ENCODE measurements at regions of chr22 and their contacts with region 1.

Region 1: DNA sequence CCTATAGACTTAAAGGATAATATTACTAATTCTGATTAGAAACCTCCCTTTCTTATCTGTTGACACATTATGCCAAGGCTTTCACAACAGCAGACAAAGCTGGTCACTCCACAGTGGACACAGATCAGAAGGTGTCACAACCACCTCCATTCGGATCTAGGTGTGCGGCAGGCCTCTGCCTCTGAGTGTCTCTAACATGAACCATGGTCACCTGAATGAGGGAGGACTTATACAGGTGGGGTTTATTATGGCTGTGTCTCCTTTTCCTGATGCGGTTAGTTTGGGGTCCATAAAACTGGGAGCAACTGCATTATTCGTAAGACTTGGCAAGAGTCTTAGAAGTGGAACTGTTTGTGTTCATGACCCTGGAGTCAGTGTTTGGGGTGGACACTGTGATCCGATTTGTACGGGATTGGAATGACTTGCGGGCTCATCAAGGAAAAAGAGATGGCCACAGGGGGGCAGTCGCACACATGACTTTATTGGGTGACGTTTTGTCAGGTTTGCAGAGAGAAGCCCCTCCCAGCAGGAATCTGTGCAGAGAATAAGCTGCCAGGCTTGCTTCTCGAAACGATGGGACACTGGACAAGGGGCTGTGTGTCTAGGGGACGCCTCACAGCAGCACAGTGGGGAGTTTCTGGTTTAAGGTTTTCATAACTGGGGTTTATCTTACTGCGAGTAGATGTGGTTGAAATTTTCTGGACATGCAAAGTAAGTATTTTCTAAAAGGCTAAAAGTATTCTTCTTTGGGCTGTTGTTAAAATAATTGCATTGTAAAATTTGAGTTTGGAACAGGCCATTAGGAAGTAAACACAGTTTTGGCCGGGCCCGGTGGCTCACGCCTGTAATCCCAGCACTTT is 90.6 kb downstream of the GAB4 start:
- DNase-seq: peak; percentile 71
- ATAC-seq: peak; percentile 57
- H3K4me3 Mint-ChIP-seq: no peak overlapping the region
- H3K27ac Mint-ChIP-seq: no peak overlapping the region
- H3K4me1 Mint-ChIP-seq: peaks cover 23% of the 10 kb centered on the region
- H3K27me3 Mint-ChIP-seq: peaks cover 22% of the 10 kb centered on the region

Region 2: GRCh38 chr22:16774911-16775500 is 142.4 kb before region 1 on chr22:
- CTCF ChIA-PET with region 1: no interaction called
- DNase-seq: no peak
- ATAC-seq: no peak
- H3K4me3 Mint-ChIP-seq: no peak overlapping the region
- H3K27ac Mint-ChIP-seq: no peak overlapping the region
- H3K4me1 Mint-ChIP-seq: peaks cover 5% of the 10 kb centered on the region
- H3K27me3 Mint-ChIP-seq: no peaks in the 10 kb centered on the region

Region 3: DNA sequence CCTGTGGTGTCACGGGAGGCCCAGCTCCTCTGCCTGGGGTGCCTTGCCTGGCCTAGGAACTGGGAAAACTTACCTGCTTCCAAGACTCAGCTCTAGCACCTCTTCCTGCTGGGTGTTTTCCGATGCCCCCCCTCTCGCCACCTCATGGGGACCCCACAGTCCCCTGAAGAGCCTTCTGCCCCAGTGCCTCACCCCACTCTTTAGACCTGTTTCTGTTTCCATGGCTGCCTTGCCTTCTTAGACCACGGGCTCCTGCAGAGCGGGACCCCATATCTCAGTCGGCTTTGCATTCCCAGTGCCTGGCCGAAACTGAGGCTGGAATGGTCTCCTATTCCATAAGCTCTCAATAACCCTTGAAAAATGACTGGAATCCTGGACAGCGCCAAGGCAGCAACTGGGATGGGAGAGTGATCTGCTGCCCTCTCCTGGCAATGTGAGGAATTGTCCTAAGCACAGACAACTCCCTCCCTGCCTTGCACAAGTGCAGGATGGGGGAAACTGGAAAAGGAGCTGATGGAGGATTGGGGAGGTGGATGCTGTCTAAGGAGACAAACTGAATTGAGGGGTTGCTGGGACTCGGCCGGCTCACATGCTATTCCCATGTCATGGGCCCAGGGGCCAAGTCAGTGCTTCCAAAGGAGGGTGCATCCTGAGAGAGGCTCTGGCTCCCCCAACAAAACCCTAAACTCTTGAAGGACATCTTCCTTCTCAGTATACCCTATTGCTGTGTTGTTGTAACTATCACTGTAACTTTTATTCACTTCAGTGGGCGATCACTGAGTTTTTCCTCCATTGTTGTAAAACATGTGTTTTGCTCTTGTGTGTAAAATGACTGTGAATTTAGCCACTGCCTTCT is 140.8 kb after region 1 on chr22:
- CTCF ChIA-PET with region 1: interaction called, 21 read pairs
- DNase-seq: peak; percentile 61
- ATAC-seq: peak; percentile 63
- H3K4me3 Mint-ChIP-seq: no peak overlapping the region
- H3K27ac Mint-ChIP-seq: no peak overlapping the region
- H3K4me1 Mint-ChIP-seq: no peaks in the 10 kb centered on the region
- H3K27me3 Mint-ChIP-seq: peaks cover 10% of the 10 kb centered on the region

Measured in activated CD8-positive, alpha-beta memory T cell treated with anti-CD3 and anti-CD28 coated beads, Interleukin-2, amount 10 ng/mL, durations not matched to agents 7 days and 5 days (primary cell).